PC-9 (cell line): ENCODE measurements at regions of chr17 and their contacts with region 1.

Region 1: DNA sequence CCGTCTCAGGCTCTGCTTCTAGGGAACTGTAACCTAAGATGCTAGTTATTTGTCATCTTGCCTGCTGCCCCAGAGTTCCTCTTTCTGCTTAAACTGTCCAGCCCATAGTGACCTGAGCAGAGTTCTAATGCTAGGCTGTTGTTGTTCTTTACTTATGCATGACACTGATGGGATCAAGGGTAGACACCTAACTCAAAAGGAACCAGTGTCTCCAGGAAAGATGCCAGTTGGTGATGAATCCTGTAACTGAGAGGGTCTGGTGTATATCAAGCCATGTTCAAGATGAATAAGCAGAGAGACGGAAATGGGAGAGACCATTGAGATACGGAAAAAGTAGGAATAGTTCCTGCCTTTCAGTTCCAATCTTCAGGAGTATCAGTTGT is 13.7 kb downstream of the APOH start:
- DNase-seq: no peak
- H3K4me3 ChIP-seq: no peak overlapping the region
- H3K27ac ChIP-seq: no peak overlapping the region
- H3K4me1 ChIP-seq: no peaks in the 10 kb centered on the region
- H3K27me3 ChIP-seq: no peaks in the 10 kb centered on the region
- CTCF ChIP-seq: no peak

Region 2: GRCh38 chr17:65307961-65308316 is 907.6 kb before region 1 on chr17:
- CTCF ChIA-PET with region 1: interaction called, 14 read pairs
- POLR2A ChIA-PET with region 1: no interaction called
- intact Hi-C with region 1: no loop called
- DNase-seq: no peak
- H3K4me3 ChIP-seq: no peak overlapping the region
- H3K27ac ChIP-seq: no peak overlapping the region
- H3K4me1 ChIP-seq: no peaks in the 10 kb centered on the region
- H3K27me3 ChIP-seq: peaks cover 12% of the 10 kb centered on the region; the same call in 1 of the 2 replicates
- CTCF ChIP-seq: no peak